ENCODE measurements at regions of chr6 and their contacts with region 1.

Region 1: DNA sequence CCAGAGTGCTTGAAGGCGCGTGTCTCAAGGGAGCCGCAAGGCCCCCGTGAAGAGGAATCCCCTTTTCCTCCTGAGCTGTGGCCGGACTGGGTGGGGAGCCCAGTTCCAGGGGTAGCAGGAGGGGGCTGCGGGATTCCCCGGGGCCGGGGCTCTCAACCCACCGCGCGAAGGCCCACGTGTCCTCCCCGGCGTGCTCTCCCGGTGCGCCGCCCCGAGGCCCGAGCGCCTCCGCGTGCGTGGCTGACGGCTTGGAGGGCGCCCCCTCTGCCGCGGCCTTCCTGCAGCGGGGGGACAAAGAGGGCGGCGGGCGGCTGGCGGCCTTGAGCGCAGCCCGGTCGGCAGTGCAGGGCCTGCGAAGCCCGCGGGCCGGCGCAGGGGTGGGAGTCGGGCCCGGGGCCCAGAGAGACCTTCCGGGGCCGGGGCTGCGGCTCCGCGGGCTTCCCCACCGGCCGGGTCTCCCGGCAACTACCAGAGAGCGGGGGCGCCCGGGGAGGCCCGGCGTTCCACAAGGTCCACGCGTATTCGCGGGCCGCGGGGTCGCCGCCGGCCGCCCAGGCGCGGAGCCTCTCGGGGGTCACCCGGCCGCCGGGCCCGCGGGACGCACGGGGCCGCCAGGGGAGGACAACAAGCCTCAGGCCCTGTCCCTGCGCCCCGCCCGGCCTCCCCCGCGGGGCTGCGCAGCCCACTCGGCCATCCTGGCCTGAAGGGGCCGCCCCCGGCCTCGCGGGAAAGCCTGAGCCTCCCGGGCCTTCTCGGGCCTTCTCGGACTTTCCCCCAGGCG is at the start of gene FAM217A:
- DNase-seq: peak; percentile 7 to 67
- H3K4me3 ChIP-seq: peak within 1 kb of the TSS in 1 of 4 experiments; percentile 38; a peak in 1 of 8 replicates
- H3K27ac ChIP-seq: no peak within 1 kb of the TSS
- H3K4me1 ChIP-seq: peaks cover 0 to 7% (median 4%) of the 10 kb centered on the region in 4 experiments; a peak in 3 of 7 replicates
- H3K27me3 ChIP-seq: peaks cover 0 to 3% (median 0%) of the 10 kb centered on the region in 4 experiments; a peak in 1 of 7 replicates
- CTCF ChIP-seq: no peak
- EP300 ChIP-seq: no peak
- POLR2A ChIP-seq: no peak
- RAD21 ChIP-seq: no peak
- total RNA-seq, gene FAM217A: not detected in 2 replicates

Region 2: GRCh38 chr6:4066029-4066755 is 12.7 kb before region 1 on chr6:
- CTCF ChIA-PET with region 1: interaction called, 3 read pairs
- POLR2A ChIA-PET with region 1: interaction called, 10 read pairs
- DNase-seq: no peak
- H3K4me3 ChIP-seq: no peak overlapping the region
- H3K27ac ChIP-seq: no peak overlapping the region
- H3K4me1 ChIP-seq: no peaks in the 10 kb centered on the region
- H3K27me3 ChIP-seq: no peaks in the 10 kb centered on the region
- CTCF ChIP-seq: no peak
- EP300 ChIP-seq: no peak
- POLR2A ChIP-seq: no peak; a peak in 1 of 3 replicates
- RAD21 ChIP-seq: no peak

Region 3: DNA sequence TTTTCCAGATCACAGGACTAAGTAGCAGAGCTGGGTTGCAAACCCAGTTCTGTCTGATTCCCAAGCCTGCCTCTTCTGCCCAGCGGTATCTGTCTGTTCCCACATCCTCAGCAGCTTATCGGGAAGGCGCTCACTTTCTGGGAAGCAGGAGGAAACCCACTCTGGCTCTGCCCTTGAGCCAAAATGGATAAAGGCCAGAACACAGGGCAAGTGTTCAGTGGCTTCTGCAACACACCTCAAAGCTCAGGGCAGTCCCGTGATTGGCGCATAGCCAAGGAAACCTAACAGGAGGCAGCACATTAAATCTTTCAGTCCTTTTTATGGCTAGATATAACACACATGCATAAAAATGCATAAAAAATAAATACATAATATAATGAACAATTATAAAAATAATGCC is 1665.6 kb after region 1 on chr6:
- CTCF ChIA-PET with region 1: no interaction called
- POLR2A ChIA-PET with region 1: no interaction called
- DNase-seq: no peak
- H3K4me3 ChIP-seq: no peak overlapping the region
- H3K27ac ChIP-seq: no peak overlapping the region
- H3K4me1 ChIP-seq: peaks cover 0 to 2% (median under 1%) of the 10 kb centered on the region in 4 experiments; a peak in 2 of 7 replicates
- H3K27me3 ChIP-seq: no peaks in the 10 kb centered on the region
- CTCF ChIP-seq: no peak
- EP300 ChIP-seq: no peak
- POLR2A ChIP-seq: no peak
- RAD21 ChIP-seq: no peak

Measured in H1 (cell line).